B cell (primary cell): ENCODE measurements at regions of chr20 and their contacts with region 1.

Region 1: DNA sequence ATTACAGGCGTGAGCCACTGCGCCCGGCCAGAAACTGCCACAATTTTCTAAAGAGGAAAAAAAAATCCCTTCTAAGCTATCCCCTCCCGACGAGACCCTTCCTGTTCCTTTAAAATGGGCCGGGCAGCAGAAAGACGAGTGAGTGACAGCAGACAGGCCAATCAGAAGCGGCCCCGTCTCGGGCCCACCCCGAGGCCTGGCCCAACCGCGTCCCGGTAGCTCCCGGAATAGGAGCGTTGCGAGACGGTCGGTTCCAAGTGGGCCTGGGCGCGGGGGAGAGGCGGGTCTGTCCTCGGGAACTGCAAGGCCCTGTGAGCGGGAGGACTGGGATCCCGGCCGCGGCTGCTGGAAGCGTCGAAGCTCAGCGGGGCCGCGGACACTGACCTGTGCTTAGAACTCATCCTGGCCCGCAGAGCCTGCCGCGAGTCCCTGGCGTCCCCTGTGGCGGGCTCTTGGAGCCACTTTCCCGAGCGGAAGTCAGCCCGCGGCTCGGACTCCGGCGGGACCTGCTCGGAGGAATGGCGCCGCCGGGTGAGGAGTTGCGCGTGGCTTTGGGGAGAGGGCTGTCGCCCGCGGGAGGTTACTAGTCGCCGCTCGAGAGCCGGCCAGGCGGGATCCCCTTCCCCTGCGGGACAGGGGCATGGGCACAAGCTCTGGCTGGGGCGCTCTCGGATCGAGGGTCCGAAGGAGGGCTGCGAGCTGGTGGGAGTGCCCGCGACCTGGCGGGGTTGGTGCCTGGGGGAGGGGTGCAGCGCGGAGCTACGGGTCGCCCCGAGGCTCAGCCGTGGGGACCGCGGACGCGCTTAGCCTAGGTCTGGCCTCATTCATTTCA is at the starts of genes MROH8 and RPN2:
- DNase-seq: peak; percentile 95
- ATAC-seq: peak; percentile 91
- H3K4me3 ChIP-seq: peak within 1 kb of the TSS; percentile 85 to 100 (median 89)
- H3K4me3 Mint-ChIP-seq: peak within 1 kb of the TSS; percentile 98
- H3K27ac ChIP-seq: peak within 1 kb of the TSS; percentile 80 to 95
- H3K27ac Mint-ChIP-seq: peak within 1 kb of the TSS; percentile 99
- H3K4me1 ChIP-seq: peaks cover 24 to 34% of the 10 kb centered on the region in 2 donors
- H3K4me1 Mint-ChIP-seq: peaks cover 40% of the 10 kb centered on the region
- H3K27me3 ChIP-seq: no peaks in the 10 kb centered on the region
- H3K27me3 Mint-ChIP-seq: no peaks in the 10 kb centered on the region
- CTCF ChIP-seq: no peak
- total RNA-seq, gene MROH8: 4.6 and 6.3 TPM in 2 replicates
- total RNA-seq, gene RPN2: 80.2 and 86.9 TPM in 2 replicates

Region 2: DNA sequence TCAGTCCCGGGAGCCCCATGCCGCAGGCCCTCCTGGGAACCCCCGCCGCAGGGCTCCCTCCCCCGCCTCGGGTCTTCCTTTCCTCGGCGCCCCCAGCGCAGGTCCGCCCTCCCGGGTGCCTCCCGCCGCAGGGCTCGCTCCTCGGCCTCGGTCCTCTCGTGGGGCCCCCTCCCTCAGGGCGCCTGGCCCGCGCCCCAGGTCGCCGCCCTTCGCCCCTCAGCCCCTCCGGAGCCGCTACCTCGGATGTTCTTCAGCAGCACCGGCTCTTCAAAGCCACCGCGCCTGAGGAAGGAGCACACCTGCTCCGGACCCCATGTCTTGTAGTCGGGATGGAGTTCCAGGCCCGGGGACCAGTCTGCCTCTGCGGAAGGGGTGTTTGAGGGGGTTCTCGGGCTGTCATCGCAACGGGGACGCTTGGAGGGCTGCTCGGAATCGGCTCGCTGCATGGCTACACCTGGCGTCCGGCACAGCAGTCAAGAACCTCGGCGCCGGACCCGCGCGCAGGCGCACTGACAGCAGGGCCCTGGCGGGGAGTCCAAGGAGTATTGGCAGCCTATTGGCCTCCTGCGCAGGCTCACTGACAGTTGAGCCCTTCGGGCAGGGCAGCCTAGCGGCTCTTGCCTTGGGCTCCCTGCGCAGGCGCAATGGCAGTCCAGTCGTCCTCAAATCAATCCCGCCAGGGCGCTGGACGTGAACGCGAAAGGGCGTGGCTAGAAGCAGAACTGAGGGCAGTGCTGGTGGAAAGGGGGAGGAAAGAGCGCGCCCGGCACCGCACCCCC is 227.7 kb before region 1 on chr20 and contains the start of gene SAMHD1:
- CTCF ChIA-PET with region 1: no interaction called
- POLR2A ChIA-PET with region 1: interaction called, 4 read pairs
- intact Hi-C with region 1: loop called (anchors 2 kb)
- DNase-seq: peak; percentile 90
- ATAC-seq: peak; percentile 96
- H3K4me3 ChIP-seq: peak within 1 kb of the TSS; percentile 81 to 93 (median 88)
- H3K4me3 Mint-ChIP-seq: peak within 1 kb of the TSS; percentile 99
- H3K27ac ChIP-seq: peak within 1 kb of the TSS; percentile 48 to 78
- H3K27ac Mint-ChIP-seq: peak within 1 kb of the TSS; percentile 95
- H3K4me1 ChIP-seq: peaks cover 20 to 23% of the 10 kb centered on the region in 2 donors
- H3K4me1 Mint-ChIP-seq: peaks cover 27% of the 10 kb centered on the region
- H3K27me3 ChIP-seq: no peaks in the 10 kb centered on the region
- H3K27me3 Mint-ChIP-seq: no peaks in the 10 kb centered on the region
- CTCF ChIP-seq: no peak
- total RNA-seq, gene SAMHD1: 11.6 and 12.8 TPM in 2 replicates

Region 3: GRCh38 chr20:37095599-37096414 is 83.2 kb before region 1 on chr20 and contains the start of gene RBL1:
- CTCF ChIA-PET with region 1: interaction called, 4 read pairs
- POLR2A ChIA-PET with region 1: interaction called, 8 read pairs
- intact Hi-C with region 1: loop called (anchors 1 kb)
- DNase-seq: peak; percentile 96
- ATAC-seq: peak; percentile 86
- H3K4me3 ChIP-seq: peak within 1 kb of the TSS; percentile 62 to 77 (median 73)
- H3K4me3 Mint-ChIP-seq: peak within 1 kb of the TSS; percentile 98
- H3K27ac ChIP-seq: peak within 1 kb of the TSS; percentile 88 to 95
- H3K27ac Mint-ChIP-seq: peak within 1 kb of the TSS; percentile 100
- H3K4me1 ChIP-seq: peaks cover 13 to 28% of the 10 kb centered on the region in 2 donors
- H3K4me1 Mint-ChIP-seq: peaks cover 29% of the 10 kb centered on the region
- H3K27me3 ChIP-seq: no peaks in the 10 kb centered on the region
- H3K27me3 Mint-ChIP-seq: no peaks in the 10 kb centered on the region
- CTCF ChIP-seq: peak; percentile 13
- total RNA-seq, gene RBL1: 25.5 and 27.8 TPM in 2 replicates

Region 4: DNA sequence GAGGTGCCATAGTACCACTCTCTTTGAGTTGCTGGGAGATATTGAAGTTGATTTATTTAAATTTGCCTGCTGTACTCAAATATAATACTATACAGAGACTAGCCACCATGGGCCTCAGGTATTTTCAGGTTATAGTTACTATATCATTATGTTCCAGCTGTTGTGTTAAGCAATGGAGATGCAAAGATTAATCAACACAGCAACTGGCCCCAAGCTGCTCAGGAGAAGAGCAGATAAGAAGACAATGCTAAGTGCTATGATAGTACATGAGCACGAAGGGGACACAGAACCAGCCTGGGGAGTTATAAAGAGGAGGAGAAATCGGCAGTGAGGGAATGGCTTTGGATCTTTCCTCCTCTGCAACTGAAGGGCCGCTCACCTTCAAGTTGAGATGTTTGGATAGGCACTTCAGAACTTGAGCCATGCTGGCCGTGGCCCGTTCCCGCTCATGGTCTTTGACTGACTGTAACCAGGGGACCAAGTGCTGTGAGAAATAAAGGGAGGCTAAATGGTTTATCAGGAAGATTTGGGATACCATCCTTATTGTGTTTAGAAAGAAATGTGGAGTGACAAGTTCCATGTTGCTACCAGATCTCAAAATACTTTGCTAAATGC is 24.3 kb before region 1 on chr20:
- CTCF ChIA-PET with region 1: no interaction called
- POLR2A ChIA-PET with region 1: no interaction called
- intact Hi-C with region 1: no loop called
- DNase-seq: no peak
- ATAC-seq: no peak
- H3K4me3 ChIP-seq: no peak overlapping the region
- H3K4me3 Mint-ChIP-seq: no peak overlapping the region
- H3K27ac ChIP-seq: no peak overlapping the region
- H3K27ac Mint-ChIP-seq: no peak overlapping the region
- H3K4me1 ChIP-seq: no peaks in the 10 kb centered on the region
- H3K4me1 Mint-ChIP-seq: no peaks in the 10 kb centered on the region
- H3K27me3 ChIP-seq: no peaks in the 10 kb centered on the region
- H3K27me3 Mint-ChIP-seq: no peaks in the 10 kb centered on the region
- CTCF ChIP-seq: no peak

Region 5: GRCh38 chr20:37693635-37694626 is 514.9 kb after region 1 on chr20 and contains the start of gene CTNNBL1:
- CTCF ChIA-PET with region 1: no interaction called
- POLR2A ChIA-PET with region 1: no interaction called
- intact Hi-C with region 1: loop called (anchors 5 kb)
- DNase-seq: peak; percentile 97
- ATAC-seq: peak; percentile 94
- H3K4me3 ChIP-seq: peak within 1 kb of the TSS; percentile 61 to 97 (median 67)
- H3K4me3 Mint-ChIP-seq: peak within 1 kb of the TSS; percentile 99
- H3K27ac ChIP-seq: peak within 1 kb of the TSS; percentile 7 to 75
- H3K27ac Mint-ChIP-seq: peak within 1 kb of the TSS; percentile 94
- H3K4me1 ChIP-seq: peaks cover 23 to 31% of the 10 kb centered on the region in 2 donors
- H3K4me1 Mint-ChIP-seq: peaks cover 45% of the 10 kb centered on the region
- H3K27me3 ChIP-seq: peaks cover 0 to 8% (median 6%) of the 10 kb centered on the region in 4 experiments
- H3K27me3 Mint-ChIP-seq: peaks cover 8% of the 10 kb centered on the region
- CTCF ChIP-seq: no peak
- total RNA-seq, gene CTNNBL1: 64.7 and 64.8 TPM in 2 replicates